Naive thymus-derived CD8-positive, alpha-beta T cell (primary cell): ENCODE measurements at regions of chr1 and their contacts with region 1.

Region 1: DNA sequence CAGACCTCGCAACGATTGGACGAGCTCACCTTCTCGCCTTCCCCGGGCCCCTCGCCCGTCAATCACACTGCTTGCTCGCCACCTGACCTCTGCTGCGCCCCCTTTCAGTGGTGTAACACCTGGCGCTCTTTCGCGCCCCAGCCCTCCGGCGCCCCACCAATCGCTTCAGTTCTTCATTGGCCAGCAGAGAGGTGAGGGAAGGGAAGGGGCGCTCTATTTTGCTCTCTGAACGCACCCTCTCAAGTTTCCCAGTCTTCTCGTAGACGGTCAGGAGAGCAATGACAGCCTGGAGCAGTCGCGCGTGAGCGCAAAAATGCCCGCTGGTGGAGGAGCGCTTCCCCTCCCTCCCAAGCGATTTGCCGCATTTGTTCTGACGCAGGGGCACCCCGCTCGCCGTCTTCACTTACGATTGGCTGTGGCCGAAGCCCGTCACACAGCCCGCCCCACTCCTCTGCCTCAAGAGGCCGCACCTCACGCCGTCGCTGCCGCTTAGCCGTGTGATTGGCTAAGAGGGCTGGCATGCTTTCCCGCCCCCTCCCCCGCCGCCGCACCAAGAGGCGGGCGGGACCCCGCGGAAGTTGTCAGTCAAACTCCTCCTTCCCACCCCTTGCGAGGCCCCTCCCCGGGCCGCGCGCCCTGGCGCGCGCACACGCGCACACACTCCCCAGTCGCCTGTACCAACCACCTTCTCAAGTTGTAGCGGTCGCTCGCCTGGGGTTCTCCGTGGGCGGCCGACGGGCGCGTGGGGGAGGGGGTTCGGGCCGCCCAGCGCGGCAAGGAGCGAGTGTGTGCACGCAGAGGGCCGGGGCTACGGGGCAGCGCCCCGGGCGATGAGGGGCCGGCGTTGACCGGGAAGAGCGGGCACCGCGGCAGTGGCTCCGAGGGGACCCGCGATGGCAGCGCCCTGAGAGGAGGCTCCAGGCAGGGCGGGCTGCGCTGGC is at the start of gene PPP2R5A:
- DNase-seq: peak; percentile 96 to 99 (median 99)
- ATAC-seq: peak; percentile 86
- H3K4me3 Mint-ChIP-seq: peak within 1 kb of the TSS; percentile 96 to 100 (median 98)
- H3K27ac Mint-ChIP-seq: peak within 1 kb of the TSS; percentile 96 to 100 (median 98)
- H3K4me1 Mint-ChIP-seq: peaks cover 15 to 47% (median 39%) of the 10 kb centered on the region in 4 donors
- H3K27me3 Mint-ChIP-seq: no peaks in the 10 kb centered on the region
- polyA plus RNA-seq, gene PPP2R5A: 25.8 to 30.9 (median 27.8) TPM

Region 2: GRCh38 chr1:212035123-212035834 is 249.7 kb before region 1 on chr1 and contains the starts of genes DTL and INTS7:
- POLR2A ChIA-PET with region 1: interaction called, 29 read pairs
- DNase-seq: peak; percentile 92 to 99 (median 97)
- ATAC-seq: peak; percentile 89 to 90
- H3K4me3 Mint-ChIP-seq: peak within 1 kb of the TSS; percentile 92 to 100 (median 99)
- H3K27ac Mint-ChIP-seq: peak within 1 kb of the TSS; percentile 94 to 99 (median 98)
- H3K4me1 Mint-ChIP-seq: peaks cover 16 to 63% (median 41%) of the 10 kb centered on the region in 4 donors
- H3K27me3 Mint-ChIP-seq: peaks cover 0 to 14% (median 8%) of the 10 kb centered on the region in 5 donors
- polyA plus RNA-seq, gene DTL: 0.11 to 0.62 (median 0.34) TPM
- polyA plus RNA-seq, gene INTS7: 6.2 to 7.6 (median 7.3) TPM

Region 3: GRCh38 chr1:212070720-212071302 is 214.2 kb before region 1 on chr1:
- POLR2A ChIA-PET with region 1: interaction called, 12 read pairs
- DNase-seq: peak in 3 of 10 donors; percentile 52 to 60 (median 56)
- ATAC-seq: peak; percentile 58 to 68
- H3K4me3 Mint-ChIP-seq: no peak overlapping the region
- H3K27ac Mint-ChIP-seq: no peak overlapping the region
- H3K4me1 Mint-ChIP-seq: no peaks in the 10 kb centered on the region
- H3K27me3 Mint-ChIP-seq: no peaks in the 10 kb centered on the region

Region 4: GRCh38 chr1:212196355-212196754 is 88.7 kb before region 1 on chr1:
- POLR2A ChIA-PET with region 1: no interaction called
- DNase-seq: no peak
- ATAC-seq: no peak
- H3K4me3 Mint-ChIP-seq: no peak overlapping the region
- H3K27ac Mint-ChIP-seq: no peak overlapping the region
- H3K4me1 Mint-ChIP-seq: peaks cover 0 to 6% (median 1%) of the 10 kb centered on the region in 4 donors
- H3K27me3 Mint-ChIP-seq: no peaks in the 10 kb centered on the region

Region 5: DNA sequence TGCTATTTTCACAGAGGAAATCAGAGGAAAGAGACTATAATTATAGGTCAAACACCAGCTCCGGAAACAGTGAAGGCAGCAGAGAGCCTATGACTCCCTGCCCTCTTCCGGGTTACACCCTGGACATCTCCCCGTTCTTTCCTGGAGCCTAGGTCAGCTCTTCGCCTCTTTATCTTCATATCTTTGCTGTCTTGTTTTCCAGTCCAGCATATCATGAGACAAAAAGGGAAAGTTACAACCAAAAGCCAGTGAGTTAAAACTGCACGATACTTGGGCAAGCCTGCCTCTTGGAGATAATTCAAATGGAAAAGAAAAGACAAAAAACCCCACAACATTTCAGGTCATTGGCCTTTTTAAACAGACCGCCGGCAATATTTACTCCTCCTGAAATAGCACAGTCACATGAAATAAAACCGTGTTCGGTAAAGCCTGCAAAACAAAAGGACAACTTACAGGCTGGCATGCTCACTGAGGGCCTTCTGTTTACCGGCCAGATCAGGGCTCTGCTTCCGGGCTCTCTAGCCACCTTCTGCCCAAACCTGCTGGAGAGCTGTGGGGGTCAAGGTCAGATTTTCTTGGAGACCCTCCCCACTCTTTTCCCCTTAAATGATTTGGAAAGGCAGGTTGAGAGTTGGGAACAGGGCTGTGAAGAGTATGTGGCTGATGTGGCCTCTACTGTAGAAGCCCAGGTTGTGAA is 42.6 kb before region 1 on chr1:
- POLR2A ChIA-PET with region 1: no interaction called
- DNase-seq: no peak
- ATAC-seq: no peak
- H3K4me3 Mint-ChIP-seq: peak overlapping the region in 3 of 10 donors; percentile 24 to 52 (median 50)
- H3K27ac Mint-ChIP-seq: peak overlapping the region in 4 of 10 donors; percentile 13 to 68 (median 57)
- H3K4me1 Mint-ChIP-seq: peaks cover 0 to 17% (median 5%) of the 10 kb centered on the region in 4 donors
- H3K27me3 Mint-ChIP-seq: peaks cover under 1 to 24% (median 2%) of the 10 kb centered on the region in 5 donors

Region 6: DNA sequence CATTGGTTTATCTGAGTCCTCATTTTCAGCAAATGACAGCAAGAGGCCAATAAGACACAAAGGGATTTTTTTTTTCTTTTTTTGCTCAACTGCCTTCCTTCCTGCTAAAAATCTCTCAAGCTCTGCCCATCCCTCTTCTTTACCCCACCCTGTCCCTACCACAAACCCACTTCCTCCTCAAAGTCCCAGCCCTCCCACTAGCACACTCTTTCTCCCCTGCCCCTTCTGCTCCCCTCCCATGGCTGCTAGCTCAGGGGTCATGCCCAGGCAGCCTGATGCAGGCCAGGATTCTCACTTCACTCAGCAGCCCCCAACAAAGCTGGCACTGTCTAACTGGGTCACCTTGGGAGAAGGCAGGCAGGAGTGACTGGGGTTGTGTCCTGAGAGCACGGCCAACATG is 28.6 kb before region 1 on chr1:
- POLR2A ChIA-PET with region 1: interaction called, 20 read pairs
- DNase-seq: peak in 9 of 10 donors; percentile 3 to 69 (median 37)
- ATAC-seq: peak; percentile 82 to 85
- H3K4me3 Mint-ChIP-seq: peak overlapping the region; percentile 56 to 90 (median 74)
- H3K27ac Mint-ChIP-seq: peak overlapping the region; percentile 34 to 86 (median 62)
- H3K4me1 Mint-ChIP-seq: peaks cover 39 to 82% (median 64%) of the 10 kb centered on the region in 4 donors
- H3K27me3 Mint-ChIP-seq: peaks cover 0 to 2% (median 0%) of the 10 kb centered on the region in 5 donors

Region 7: DNA sequence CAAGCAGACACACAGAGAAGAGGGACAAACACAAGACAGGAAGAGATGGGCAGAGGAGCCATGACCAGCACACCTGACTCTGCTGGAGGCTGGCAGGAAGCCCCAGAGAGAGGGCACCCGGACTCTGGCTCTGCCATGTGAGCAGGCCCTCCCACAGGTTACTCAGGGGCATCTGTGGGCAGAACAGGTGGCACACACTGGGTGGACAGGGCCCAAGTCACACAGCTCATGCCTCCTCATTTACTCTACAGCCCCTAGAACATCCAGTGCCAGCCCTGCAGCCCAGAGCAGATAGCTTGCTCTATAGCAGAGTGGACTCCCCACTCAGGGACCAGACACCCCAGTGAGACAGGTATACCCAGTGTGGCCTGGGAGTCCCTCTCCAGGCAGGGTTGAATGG is 101.0 kb after region 1 on chr1:
- POLR2A ChIA-PET with region 1: no interaction called
- DNase-seq: no peak
- ATAC-seq: no peak
- H3K4me3 Mint-ChIP-seq: no peak overlapping the region
- H3K27ac Mint-ChIP-seq: peak overlapping the region in 4 of 10 donors; percentile 6 to 60 (median 26)
- H3K4me1 Mint-ChIP-seq: peaks cover 0 to 10% (median 5%) of the 10 kb centered on the region in 4 donors
- H3K27me3 Mint-ChIP-seq: no peaks in the 10 kb centered on the region

Region 8: DNA sequence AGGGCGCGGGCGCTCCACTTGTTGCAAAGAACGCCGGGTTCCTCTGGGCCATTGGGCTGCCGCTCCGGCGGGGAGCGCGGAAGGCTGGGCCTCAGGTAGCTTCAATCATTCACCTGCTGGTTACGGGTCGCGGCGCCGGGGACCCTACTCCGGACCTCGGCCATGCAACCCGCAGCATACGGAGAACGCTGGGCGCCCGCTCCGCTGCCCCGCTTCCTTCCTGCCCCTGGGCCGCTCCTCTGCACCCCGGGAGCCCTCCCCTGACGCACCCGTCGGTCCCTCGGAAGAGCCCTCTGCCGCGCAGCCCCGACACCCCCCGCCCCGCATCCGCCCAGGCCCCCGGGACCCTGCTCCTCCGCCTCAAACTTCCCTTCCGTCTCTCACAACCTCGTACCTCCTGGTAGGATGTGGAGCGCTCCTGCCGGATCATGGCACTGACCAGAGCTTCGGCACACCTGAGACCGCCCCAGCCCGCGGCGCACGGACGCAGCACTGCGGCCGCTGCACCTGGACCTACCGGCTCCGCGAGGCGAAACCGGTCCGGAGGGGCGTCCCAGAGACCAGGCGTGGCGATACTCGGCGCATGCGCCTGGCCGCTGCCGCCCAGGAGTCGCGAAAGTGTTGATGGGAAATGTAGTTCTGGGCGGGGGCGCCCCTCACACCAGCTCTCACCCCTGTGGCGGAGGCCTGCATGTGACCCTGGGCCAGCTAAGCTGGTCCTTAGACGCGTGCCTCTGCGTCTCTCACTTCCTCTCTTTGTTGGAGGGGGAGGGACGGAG is 129.5 kb after region 1 on chr1 and contains the start of gene PACC1:
- POLR2A ChIA-PET with region 1: interaction called, 12 read pairs
- DNase-seq: peak; percentile 80 to 95 (median 88)
- ATAC-seq: peak; percentile 92 to 93
- H3K4me3 Mint-ChIP-seq: peak within 1 kb of the TSS; percentile 83 to 100 (median 98)
- H3K27ac Mint-ChIP-seq: peak within 1 kb of the TSS; percentile 76 to 96 (median 95)
- H3K4me1 Mint-ChIP-seq: peaks cover 26 to 51% (median 48%) of the 10 kb centered on the region in 4 donors
- H3K27me3 Mint-ChIP-seq: no peaks in the 10 kb centered on the region
- polyA plus RNA-seq, gene PACC1: 8.0 to 10.5 (median 8.3) TPM

Region 9: GRCh38 chr1:212432706-212433576 is 147.9 kb after region 1 on chr1 and contains the start of gene NENF:
- POLR2A ChIA-PET with region 1: interaction called, 12 read pairs
- DNase-seq: peak; percentile 51 to 76 (median 70)
- ATAC-seq: peak; percentile 97 to 99
- H3K4me3 Mint-ChIP-seq: peak within 1 kb of the TSS; percentile 60 to 85 (median 80)
- H3K27ac Mint-ChIP-seq: peak within 1 kb of the TSS in 9 of 10 donors; percentile 23 to 87 (median 68)
- H3K4me1 Mint-ChIP-seq: peaks cover 14 to 33% (median 26%) of the 10 kb centered on the region in 4 donors
- H3K27me3 Mint-ChIP-seq: no peaks in the 10 kb centered on the region
- polyA plus RNA-seq, gene NENF: 35.9 to 68.0 (median 64.9) TPM